ENCODE measurements at regions of chr11 and their contacts with region 1.

Region 1: DNA sequence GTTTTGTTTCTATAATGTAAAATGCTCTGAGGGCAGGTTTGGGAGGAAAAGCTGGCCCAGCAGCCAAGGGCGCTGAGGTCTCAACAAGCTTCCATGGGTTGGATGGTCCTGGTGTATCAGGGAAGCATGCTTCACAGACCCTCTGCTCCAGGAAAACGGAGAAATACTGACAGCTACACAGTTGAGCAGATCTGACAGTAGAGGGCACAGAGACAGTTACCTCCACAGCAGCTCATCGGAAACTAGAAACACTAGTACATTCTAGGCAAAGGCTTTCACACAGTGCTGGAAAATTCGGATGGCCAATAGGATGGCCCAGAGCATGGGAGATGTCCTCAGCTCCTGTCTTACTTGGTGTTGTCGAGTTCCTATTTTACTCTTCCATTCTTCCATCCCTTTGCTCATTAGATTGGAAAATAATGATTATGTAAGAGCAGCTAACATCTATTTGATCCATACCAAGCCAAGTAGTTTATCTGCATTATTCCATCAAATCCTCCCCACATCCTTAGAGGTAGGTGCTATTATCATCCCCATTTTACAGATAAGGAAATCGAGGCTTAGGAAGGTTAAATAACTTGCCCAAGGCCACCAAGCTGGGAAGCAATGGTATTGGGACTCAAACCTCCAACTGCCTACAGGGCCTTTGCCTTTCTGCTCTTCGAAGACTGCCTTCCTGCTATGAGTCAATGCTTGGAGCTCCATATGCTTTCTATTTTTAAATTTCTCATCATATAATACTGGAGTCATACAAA is 28.3 kb downstream of the LMO2 start:
- DNase-seq: no peak
- H3K4me3 ChIP-seq: no peak overlapping the region
- H3K27ac ChIP-seq: no peak overlapping the region
- H3K4me1 ChIP-seq: no peaks in the 10 kb centered on the region
- H3K27me3 ChIP-seq: peaks cover 0 to 1% of the 10 kb centered on the region in 2 donors
- CTCF ChIP-seq: no peak
- POLR2A ChIP-seq: no peak

Region 2: GRCh38 chr11:35412285-35412684 is 1548.7 kb after region 1 on chr11:
- intact Hi-C with region 1: loop called (anchors 5 kb)
- DNase-seq: no peak
- H3K4me3 ChIP-seq: no peak overlapping the region
- H3K27ac ChIP-seq: no peak overlapping the region
- H3K4me1 ChIP-seq: no peaks in the 10 kb centered on the region
- H3K27me3 ChIP-seq: peaks cover 0 to 4% of the 10 kb centered on the region in 2 donors
- CTCF ChIP-seq: peak in 1 of 3 donors; percentile 15
- POLR2A ChIP-seq: no peak

Measured in breast epithelium (tissue), 4 donors.